ENCODE measurements at regions of chr6 and their contacts with region 1.

Region 1: DNA sequence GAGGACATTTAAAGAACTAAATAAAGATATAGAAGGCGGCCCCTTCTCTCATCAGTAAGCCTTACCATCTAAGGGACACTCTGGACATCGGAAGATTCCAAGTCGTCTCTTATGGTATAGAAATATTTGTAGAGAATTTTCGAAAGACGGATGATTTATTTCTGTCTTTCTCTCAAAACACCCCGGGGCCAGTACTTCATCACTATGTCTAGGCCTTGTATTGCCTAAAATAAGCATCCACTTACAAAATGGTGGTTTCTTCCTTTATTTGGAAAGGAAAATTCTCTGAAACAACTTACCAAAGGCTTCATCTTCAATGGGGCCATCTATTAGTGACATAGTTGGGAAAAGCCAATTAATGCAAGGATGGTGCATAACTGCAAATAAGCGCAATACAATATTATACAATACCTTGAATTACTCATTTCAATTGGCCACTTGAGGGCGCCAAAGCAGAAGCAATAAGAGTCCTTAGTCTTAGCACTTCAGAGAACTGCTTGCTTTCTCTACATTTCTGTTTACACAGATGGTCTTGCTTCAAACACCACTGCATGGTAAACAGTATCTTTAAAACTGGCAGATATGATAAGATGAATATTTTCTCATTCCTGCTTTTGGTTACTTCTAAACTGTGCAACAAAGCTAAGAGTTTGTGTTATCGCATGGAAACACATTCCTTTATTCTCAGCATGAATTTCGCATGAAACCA is 113.2 kb downstream of the VIP start:
- DNase-seq: peak; percentile 11
- H3K4me3 Mint-ChIP-seq: no peak overlapping the region
- H3K27ac Mint-ChIP-seq: no peak overlapping the region
- H3K4me1 Mint-ChIP-seq: peaks cover 1% of the 10 kb centered on the region
- H3K27me3 Mint-ChIP-seq: peaks cover 3% of the 10 kb centered on the region

Region 2: DNA sequence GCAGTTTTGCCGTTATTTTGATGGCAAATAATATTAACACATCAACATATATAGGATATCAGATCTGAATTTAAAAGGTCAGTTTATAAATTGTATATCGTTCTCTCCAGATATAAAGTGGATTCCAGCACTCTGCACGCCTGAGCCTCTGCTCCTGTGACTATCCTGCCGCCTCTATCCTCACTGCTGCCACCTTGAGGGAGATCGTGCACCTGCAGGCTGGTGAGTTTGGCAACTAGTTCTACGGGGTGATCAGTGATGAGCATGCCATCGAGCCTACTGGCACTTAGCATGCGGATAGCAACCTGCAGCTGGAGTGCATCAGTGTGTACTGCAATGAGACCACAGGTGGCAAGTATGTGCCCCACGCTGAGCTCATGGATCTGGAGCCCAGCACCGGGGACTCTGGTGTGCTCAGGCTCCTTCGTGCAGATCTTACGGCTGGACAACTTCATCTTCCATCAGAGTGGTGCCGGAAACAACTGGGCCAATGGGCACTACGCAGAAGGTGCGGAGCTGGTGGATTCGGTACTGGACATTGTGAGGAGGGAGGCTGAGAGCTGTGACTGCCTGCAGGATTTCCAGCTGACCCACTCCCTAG is 34.1 kb after region 1 on chr6:
- intact Hi-C with region 1: loop called (anchors 2 kb)
- DNase-seq: peak; percentile 44
- H3K4me3 Mint-ChIP-seq: no peak overlapping the region
- H3K27ac Mint-ChIP-seq: no peak overlapping the region
- H3K4me1 Mint-ChIP-seq: no peaks in the 10 kb centered on the region
- H3K27me3 Mint-ChIP-seq: peaks cover 8% of the 10 kb centered on the region

Region 3: DNA sequence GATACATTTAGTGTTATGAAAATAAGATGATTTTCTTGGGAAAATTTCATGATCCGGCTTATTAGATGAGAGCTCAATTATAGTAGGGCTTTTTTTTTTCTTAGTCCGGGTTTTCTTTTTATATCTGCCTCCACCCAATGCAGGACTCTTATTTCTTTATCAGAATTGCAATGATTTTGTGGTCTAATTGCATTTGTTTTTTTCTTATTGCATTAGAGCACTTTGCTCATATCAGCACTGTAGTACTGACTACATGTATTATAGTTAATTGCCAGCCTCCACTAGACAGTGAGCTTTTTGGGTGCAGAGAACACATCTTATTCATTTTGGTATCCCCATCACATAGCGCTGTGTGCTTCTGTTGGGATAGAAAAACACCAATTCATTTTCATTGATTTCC is 69.1 kb after region 1 on chr6:
- intact Hi-C with region 1: no loop called
- DNase-seq: no peak
- H3K4me3 Mint-ChIP-seq: no peak overlapping the region
- H3K27ac Mint-ChIP-seq: no peak overlapping the region
- H3K4me1 Mint-ChIP-seq: no peaks in the 10 kb centered on the region
- H3K27me3 Mint-ChIP-seq: peaks cover 13% of the 10 kb centered on the region

Region 4: DNA sequence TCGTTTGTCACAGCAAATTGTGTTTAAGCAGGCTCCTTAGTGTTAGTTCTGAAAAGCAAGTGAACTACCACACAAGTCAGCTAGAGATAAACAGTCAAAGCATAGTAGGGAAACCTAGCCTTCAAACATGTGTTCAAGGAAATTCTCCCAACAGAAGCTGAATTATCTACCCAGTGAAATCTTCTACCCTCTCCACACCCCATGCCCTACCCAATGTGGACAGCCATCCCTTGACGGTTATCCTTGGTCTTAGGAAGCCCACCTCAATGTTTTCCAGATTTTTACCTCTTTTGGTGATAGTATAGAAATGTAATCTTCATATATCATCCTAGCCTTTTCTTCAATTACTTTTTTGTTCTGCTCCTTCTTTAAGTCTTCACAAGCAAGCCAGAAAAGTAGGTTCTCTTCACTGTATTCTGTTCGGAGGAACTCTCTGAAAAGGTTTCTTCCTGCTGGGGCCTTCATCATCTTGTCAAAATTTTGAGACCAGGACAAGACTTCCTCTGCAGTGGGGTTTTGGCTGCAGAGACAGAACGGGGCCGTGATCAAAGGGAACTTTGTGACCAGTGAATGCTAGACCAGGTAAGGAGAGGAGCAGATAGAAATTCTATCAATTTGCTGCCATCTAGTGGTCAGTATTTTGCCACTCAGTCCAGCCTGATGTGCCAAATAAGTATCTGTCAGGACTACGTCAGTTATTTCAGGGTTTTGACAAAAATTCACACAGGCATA is 160.4 kb after region 1 on chr6:
- intact Hi-C with region 1: loop called (anchors 1 kb)
- DNase-seq: peak; percentile 32
- H3K4me3 Mint-ChIP-seq: no peak overlapping the region
- H3K27ac Mint-ChIP-seq: no peak overlapping the region
- H3K4me1 Mint-ChIP-seq: peaks cover 4% of the 10 kb centered on the region
- H3K27me3 Mint-ChIP-seq: peaks cover 27% of the 10 kb centered on the region